ENCODE measurements at regions of chr3 and their contacts with region 1.

Region 1: DNA sequence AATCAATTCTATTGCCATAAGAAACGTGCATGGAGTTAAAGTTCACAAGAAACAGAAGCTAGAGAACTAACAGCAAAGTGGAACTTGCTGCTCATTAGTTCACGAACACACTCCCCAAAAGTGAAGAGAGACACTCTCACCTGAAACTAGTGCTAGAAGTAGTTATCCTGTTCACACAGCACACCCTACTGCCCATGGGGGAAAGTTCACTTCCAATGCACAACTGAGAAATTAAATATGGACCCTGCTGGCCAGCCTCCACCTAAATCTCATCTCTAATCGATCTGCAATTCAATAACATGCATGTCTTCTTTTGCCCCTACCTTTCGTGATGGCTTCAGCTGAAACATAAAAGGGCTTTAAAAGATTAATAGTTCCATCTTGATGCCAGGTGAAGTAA is 39.4 kb upstream of the FRMD4B start:
- ATAC-seq: peak in 4 of 8 experiments; percentile 18 to 51 (median 40)
- H3K4me3 ChIP-seq: no peak overlapping the region
- H3K27ac ChIP-seq: no peak overlapping the region
- H3K4me1 ChIP-seq: peaks cover 0 to 3% of the 10 kb centered on the region in 2 donors

Region 2: DNA sequence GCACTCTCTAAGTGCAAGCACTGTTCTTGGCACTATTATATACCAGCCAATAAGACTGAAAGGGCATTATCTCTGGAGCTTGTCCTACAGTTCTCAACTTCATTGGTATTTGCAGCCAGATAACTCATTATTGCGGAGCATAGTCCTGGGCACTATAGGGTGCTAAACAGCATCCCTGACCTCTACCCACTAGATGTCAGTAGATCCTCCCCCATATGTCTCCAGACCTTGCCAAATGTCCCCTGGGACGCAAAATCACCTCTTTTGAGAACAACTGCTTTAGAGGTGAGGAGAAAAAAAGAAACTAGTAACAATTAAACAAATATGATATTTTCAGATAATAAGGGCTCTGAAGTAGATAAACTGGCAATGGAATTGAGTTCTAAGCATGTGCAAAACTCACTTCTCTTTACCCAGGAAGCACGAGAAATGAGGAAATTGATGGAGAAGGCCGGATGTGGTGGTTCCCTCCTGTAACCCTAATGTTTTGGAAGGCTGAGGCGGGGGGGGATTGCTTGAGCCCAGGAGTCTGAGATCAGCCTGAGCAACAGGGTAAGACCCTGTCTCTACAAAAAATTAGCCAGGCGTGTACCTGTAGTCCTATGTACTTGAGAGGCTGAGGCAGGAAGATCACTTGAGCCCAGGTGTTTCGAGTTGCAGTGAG is 100.8 kb before region 1 on chr3:
- in situ Hi-C with region 1: loop called in 1 of 9 experiments (anchors 10 kb)
- ATAC-seq: peak in 3 of 8 experiments; percentile 9 to 73 (median 26)
- H3K4me3 ChIP-seq: no peak overlapping the region
- H3K27ac ChIP-seq: no peak overlapping the region
- H3K4me1 ChIP-seq: peaks cover 2 to 4% of the 10 kb centered on the region in 2 donors